Activated naive CD4-positive, alpha-beta T cell treated with anti-CD3 and anti-CD28 coated beads for 36 hours (primary cell): ENCODE measurements at regions of chr3 and their contacts with region 1.

Region 1: GRCh38 chr3:44761424-44762169 is at the starts of genes KIAA1143 and KIF15:
- DNase-seq: peak; percentile 99
- H3K4me3 Mint-ChIP-seq: peak within 1 kb of the TSS; percentile 94
- H3K27ac Mint-ChIP-seq: peak within 1 kb of the TSS; percentile 86
- H3K4me1 Mint-ChIP-seq: peaks cover 26% of the 10 kb centered on the region
- H3K27me3 Mint-ChIP-seq: no peaks in the 10 kb centered on the region
- total RNA-seq, gene KIAA1143: 29.1 to 35.9 TPM
- total RNA-seq, gene KIF15: 42.1 to 45.8 TPM

Region 2: GRCh38 chr3:44510000-44510368 is 251.6 kb before region 1 on chr3:
- CTCF ChIA-PET with region 1: no interaction called
- intact Hi-C with region 1: loop called (anchors 1 kb)
- DNase-seq: peak; percentile 22
- H3K4me3 Mint-ChIP-seq: peak overlapping the region; percentile 92
- H3K27ac Mint-ChIP-seq: peak overlapping the region; percentile 93
- H3K4me1 Mint-ChIP-seq: peaks cover 28% of the 10 kb centered on the region
- H3K27me3 Mint-ChIP-seq: no peaks in the 10 kb centered on the region

Region 3: DNA sequence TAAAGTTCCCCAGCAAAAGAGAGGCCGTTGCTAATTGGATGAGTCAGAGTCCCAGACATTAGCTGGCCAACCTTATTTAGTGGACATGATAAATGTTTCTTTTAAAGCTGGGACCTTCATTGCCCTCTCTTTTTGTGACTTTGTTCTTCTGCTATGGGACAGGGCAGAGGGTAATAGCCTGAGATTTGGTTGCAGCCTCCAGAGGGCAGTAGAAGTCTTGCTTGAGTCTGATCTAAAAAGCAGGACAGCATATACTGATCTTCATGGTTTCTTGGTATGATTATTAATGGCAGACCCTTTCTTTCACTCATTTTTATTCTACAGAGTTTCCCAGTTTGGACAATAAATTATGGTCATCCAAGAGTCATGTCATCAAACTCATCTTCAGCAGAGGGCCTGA is 231.7 kb before region 1 on chr3:
- CTCF ChIA-PET with region 1: no interaction called
- intact Hi-C with region 1: loop called (anchors 5 kb)
- DNase-seq: peak; percentile 44
- H3K4me3 Mint-ChIP-seq: no peak overlapping the region
- H3K27ac Mint-ChIP-seq: no peak overlapping the region
- H3K4me1 Mint-ChIP-seq: no peaks in the 10 kb centered on the region
- H3K27me3 Mint-ChIP-seq: peaks cover 17% of the 10 kb centered on the region

Region 4: GRCh38 chr3:44729384-44729910 is 32.1 kb before region 1 on chr3 and contains the start of gene ZNF501:
- CTCF ChIA-PET with region 1: no interaction called
- intact Hi-C with region 1: loop called (anchors 1 kb)
- DNase-seq: peak; percentile 94
- H3K4me3 Mint-ChIP-seq: peak within 1 kb of the TSS; percentile 90
- H3K27ac Mint-ChIP-seq: peak within 1 kb of the TSS; percentile 73
- H3K4me1 Mint-ChIP-seq: peaks cover 9% of the 10 kb centered on the region
- H3K27me3 Mint-ChIP-seq: no peaks in the 10 kb centered on the region
- total RNA-seq, gene ZNF501: 1.6 to 2.7 TPM

Region 5: DNA sequence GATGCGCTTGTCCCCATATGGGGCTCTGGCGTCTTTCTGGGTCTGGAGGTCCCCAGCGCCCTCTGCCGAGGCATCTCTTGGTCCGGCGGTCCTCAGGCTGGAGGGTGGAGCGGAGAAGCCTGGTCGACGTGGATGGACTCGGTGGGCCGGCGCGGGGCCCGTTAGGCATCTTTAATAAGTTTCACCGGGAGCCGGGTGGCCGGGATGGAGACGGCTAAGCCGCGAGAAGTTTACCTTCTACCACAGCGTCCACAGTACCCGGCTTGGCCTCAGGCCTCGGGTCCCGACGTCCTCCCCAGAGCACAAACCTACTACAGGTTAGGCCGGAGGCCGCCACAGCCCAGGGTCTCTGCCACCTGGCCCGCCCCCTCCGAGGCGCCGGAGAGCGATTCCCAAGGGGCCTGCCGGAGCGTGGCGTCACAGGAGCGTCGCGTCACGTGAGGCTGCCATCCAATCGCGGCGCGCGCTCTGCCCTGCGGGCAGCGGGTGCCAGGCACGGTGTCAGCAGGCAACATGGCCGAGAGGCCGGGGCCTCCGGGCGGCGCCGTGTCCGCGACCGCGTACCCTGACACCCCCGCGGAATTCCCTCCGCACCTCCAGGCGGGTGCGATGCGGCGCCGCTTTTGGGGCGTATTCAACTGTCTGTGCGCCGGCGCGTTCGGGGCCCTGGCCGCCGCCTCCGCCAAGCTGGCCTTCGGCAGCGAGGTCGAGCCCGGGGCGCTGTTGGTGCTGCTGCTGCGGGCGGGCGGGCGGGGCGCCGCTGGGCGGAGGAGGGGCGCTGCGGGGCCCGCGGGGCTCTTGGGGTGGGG is 100.0 kb after region 1 on chr3 and contains the start of gene TMEM42:
- CTCF ChIA-PET with region 1: interaction called, 3 read pairs
- intact Hi-C with region 1: loop called (anchors 1 kb)
- DNase-seq: peak; percentile 86
- H3K4me3 Mint-ChIP-seq: peak within 1 kb of the TSS; percentile 84
- H3K27ac Mint-ChIP-seq: peak within 1 kb of the TSS; percentile 78
- H3K4me1 Mint-ChIP-seq: peaks cover 38% of the 10 kb centered on the region
- H3K27me3 Mint-ChIP-seq: no peaks in the 10 kb centered on the region
- total RNA-seq, gene TMEM42: 13.9 to 15.8 TPM

Region 6: GRCh38 chr3:44976002-44976815 is 214.6 kb after region 1 on chr3 and contains the starts of genes EXOSC7 and ZDHHC3:
- CTCF ChIA-PET with region 1: no interaction called
- intact Hi-C with region 1: loop called (anchors 1 kb)
- DNase-seq: peak; percentile 87
- H3K4me3 Mint-ChIP-seq: peak within 1 kb of the TSS; percentile 96
- H3K27ac Mint-ChIP-seq: peak within 1 kb of the TSS; percentile 84
- H3K4me1 Mint-ChIP-seq: peaks cover 59% of the 10 kb centered on the region
- H3K27me3 Mint-ChIP-seq: no peaks in the 10 kb centered on the region
- total RNA-seq, gene EXOSC7: 61.4 to 64.7 TPM
- total RNA-seq, gene ZDHHC3: 29.5 to 31.0 TPM

Region 7: DNA sequence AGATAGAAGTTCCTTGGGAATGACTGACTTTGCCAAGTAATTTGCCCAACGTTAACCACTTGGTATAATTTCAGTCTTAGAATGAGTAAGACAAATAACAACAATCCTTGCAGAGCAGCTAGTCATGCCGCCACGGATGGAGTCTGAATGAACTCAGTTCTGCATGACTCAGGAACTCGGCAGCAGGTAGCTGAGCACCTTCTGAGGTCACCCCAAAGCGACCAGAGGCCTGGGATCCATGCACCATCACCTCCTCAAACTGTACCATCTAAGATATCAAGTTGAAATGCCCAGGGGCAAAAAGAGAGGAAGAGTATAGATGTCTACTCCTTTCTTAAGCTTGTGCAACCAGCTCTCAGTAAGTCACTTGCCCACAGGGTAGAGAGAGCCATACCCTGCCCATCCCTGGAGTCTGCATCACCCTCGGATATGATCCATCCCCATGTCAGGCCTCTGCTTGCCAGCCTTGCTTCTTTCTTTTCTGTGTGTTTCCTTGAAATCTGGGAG is 393.1 kb after region 1 on chr3:
- CTCF ChIA-PET with region 1: no interaction called
- intact Hi-C with region 1: loop called (anchors 5 kb)
- DNase-seq: no peak
- H3K4me3 Mint-ChIP-seq: no peak overlapping the region
- H3K27ac Mint-ChIP-seq: no peak overlapping the region
- H3K4me1 Mint-ChIP-seq: no peaks in the 10 kb centered on the region
- H3K27me3 Mint-ChIP-seq: no peaks in the 10 kb centered on the region

Region 8: DNA sequence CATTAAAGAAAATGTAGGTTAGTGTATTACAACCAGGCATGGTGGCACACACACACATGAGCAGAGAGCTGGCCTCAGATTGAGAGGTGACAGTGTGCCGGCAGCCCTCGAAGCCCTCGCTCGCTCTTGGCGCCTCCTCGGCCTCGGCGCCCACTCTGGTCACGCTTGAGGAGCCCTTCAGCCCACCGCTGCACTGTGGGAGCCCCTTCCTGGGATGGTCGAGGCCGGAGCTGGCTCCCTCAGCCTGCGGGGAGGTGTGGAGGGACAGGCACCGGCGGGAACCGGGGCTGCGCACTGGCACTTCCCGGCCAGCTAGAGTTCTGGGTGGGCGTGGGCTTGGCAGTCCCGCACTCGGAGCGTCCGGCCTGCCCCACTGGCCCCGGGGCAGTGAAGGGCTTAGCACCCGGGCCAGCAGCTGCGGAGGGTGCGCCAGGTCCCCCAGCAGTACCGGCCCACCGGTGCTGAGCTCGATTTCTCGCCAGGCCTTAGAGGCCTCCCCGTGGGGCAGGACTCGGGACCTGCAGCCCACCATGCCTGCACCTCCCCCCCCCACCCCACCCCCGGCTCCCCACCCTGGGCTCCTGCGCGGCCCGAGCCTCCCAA is 544.9 kb after region 1 on chr3:
- CTCF ChIA-PET with region 1: no interaction called
- intact Hi-C with region 1: no loop called
- DNase-seq: no peak
- H3K4me3 Mint-ChIP-seq: no peak overlapping the region
- H3K27ac Mint-ChIP-seq: no peak overlapping the region
- H3K4me1 Mint-ChIP-seq: no peaks in the 10 kb centered on the region
- H3K27me3 Mint-ChIP-seq: peaks cover 2% of the 10 kb centered on the region

Region 9: DNA sequence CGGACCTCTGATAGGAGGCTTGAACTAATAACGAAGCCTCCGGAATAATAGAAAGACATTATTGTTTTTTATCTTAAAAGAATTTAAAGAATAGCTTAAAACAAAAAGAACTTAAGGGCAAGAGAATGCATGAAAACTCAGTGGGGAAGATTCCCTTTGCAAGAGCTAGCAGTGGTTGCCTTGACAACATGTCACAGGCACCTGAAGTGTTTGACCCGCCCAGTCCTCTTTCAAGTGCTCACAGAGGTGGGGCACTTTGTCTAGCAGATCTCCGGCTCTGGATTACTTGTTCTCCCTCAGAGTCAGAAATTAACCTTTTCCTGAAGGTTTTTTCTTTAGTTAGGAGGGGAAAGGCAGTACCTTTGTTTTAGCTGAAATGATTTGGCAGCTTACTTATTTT is 664.6 kb after region 1 on chr3:
- CTCF ChIA-PET with region 1: no interaction called
- intact Hi-C with region 1: no loop called
- DNase-seq: no peak
- H3K4me3 Mint-ChIP-seq: no peak overlapping the region
- H3K27ac Mint-ChIP-seq: no peak overlapping the region
- H3K4me1 Mint-ChIP-seq: no peaks in the 10 kb centered on the region
- H3K27me3 Mint-ChIP-seq: no peaks in the 10 kb centered on the region